ENCODE measurements at regions of chr3 and their contacts with region 1.

Region 1: DNA sequence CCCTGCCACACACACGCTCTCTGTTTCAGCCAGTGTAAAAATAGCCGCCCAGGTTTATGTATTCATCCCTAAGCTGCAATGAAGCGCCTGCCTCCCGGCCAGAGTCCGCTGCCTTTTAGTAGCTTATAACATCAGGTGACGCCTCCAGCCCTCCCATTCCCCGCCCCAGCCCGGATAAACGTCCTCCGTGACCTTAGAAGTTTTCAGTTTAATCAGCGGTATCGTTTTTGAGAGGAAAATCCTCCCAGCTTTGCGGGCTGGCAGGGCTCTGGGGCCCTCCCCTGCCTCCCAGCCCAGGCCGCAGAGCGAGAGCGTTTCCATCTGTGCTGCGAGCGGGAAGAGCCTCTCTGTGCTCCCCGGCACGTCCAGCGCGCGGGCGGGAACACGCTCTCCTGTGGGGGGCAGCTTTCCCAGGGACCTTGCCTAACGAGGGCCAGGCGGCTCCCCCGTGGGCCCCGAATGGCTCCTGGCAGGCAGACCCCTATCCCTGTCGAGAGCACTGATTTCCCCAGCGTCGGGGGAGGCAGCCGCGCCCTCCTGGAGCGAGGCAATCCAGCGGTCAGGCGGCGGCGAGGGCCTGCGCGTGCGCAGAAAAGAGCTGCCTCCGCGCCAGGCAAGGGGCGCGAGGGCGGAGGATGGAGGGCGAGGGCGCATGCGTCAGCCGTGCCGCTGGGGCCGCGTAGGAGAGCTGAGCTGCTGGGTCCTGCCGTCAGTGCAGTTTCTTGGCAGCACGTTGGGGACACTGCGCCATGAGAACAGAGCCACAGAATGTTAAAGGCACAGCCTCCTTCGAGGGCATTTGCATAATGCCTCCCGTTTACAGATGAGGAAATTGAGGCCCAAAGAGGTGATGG is 71.1 kb downstream of the CCNL1 start:
- DNase-seq: peak; percentile 94 to 95 (median 94)
- H3K4me3 ChIP-seq: peak overlapping the region; percentile 49 to 76
- H3K4me3 Mint-ChIP-seq: peak overlapping the region; percentile 79 to 93 (median 89)
- H3K27ac ChIP-seq: peak overlapping the region; percentile 91
- H3K27ac Mint-ChIP-seq: peak overlapping the region; percentile 99 to 100 (median 99)
- H3K4me1 ChIP-seq: peaks cover 41% of the 10 kb centered on the region
- H3K4me1 Mint-ChIP-seq: peaks cover 30 to 50% (median 41%) of the 10 kb centered on the region in 4 donors
- H3K27me3 ChIP-seq: no peaks in the 10 kb centered on the region
- H3K27me3 Mint-ChIP-seq: no peaks in the 10 kb centered on the region

Region 2: GRCh38 chr3:155730847-155731246 is 1358.0 kb before region 1 on chr3:
- CTCF ChIA-PET with region 1: no interaction called
- POLR2A ChIA-PET with region 1: no interaction called
- intact Hi-C with region 1: no loop called
- DNase-seq: no peak
- H3K4me3 ChIP-seq: no peak overlapping the region
- H3K4me3 Mint-ChIP-seq: no peak overlapping the region
- H3K27ac ChIP-seq: no peak overlapping the region
- H3K27ac Mint-ChIP-seq: no peak overlapping the region
- H3K4me1 ChIP-seq: no peaks in the 10 kb centered on the region
- H3K4me1 Mint-ChIP-seq: no peaks in the 10 kb centered on the region
- H3K27me3 ChIP-seq: peaks cover 3% of the 10 kb centered on the region
- H3K27me3 Mint-ChIP-seq: peaks cover 14 to 20% of the 10 kb centered on the region in 2 donors

Region 3: GRCh38 chr3:156483961-156484787 is 604.7 kb before region 1 on chr3:
- CTCF ChIA-PET with region 1: interaction called, 8 read pairs
- POLR2A ChIA-PET with region 1: interaction called, 32 read pairs
- intact Hi-C with region 1: no loop called
- DNase-seq: peak; percentile 55 to 81 (median 64)
- H3K4me3 ChIP-seq: peak overlapping the region; percentile 42 to 55
- H3K4me3 Mint-ChIP-seq: peak overlapping the region; percentile 21 to 87 (median 77)
- H3K27ac ChIP-seq: peak overlapping the region; percentile 63
- H3K27ac Mint-ChIP-seq: peak overlapping the region; percentile 77 to 94 (median 92)
- H3K4me1 ChIP-seq: peaks cover 43% of the 10 kb centered on the region
- H3K4me1 Mint-ChIP-seq: peaks cover 32 to 52% (median 39%) of the 10 kb centered on the region in 4 donors
- H3K27me3 ChIP-seq: no peaks in the 10 kb centered on the region
- H3K27me3 Mint-ChIP-seq: no peaks in the 10 kb centered on the region

Region 4: GRCh38 chr3:156723182-156723619 is 365.6 kb before region 1 on chr3:
- CTCF ChIA-PET with region 1: no interaction called
- POLR2A ChIA-PET with region 1: no interaction called
- intact Hi-C with region 1: no loop called
- DNase-seq: no peak
- H3K4me3 ChIP-seq: no peak overlapping the region
- H3K4me3 Mint-ChIP-seq: no peak overlapping the region
- H3K27ac ChIP-seq: no peak overlapping the region
- H3K27ac Mint-ChIP-seq: no peak overlapping the region
- H3K4me1 ChIP-seq: no peaks in the 10 kb centered on the region
- H3K4me1 Mint-ChIP-seq: peaks cover 0 to 2% (median under 1%) of the 10 kb centered on the region in 4 donors
- H3K27me3 ChIP-seq: no peaks in the 10 kb centered on the region
- H3K27me3 Mint-ChIP-seq: no peaks in the 10 kb centered on the region

Region 5: GRCh38 chr3:157064402-157064801 is 24.4 kb before region 1 on chr3:
- CTCF ChIA-PET with region 1: interaction called, 10 read pairs
- POLR2A ChIA-PET with region 1: interaction called, 37 read pairs
- intact Hi-C with region 1: no loop called
- DNase-seq: no peak
- H3K4me3 ChIP-seq: no peak overlapping the region
- H3K4me3 Mint-ChIP-seq: no peak overlapping the region
- H3K27ac ChIP-seq: no peak overlapping the region
- H3K27ac Mint-ChIP-seq: peak overlapping the region in 3 of 7 donors; percentile 39 to 70 (median 42)
- H3K4me1 ChIP-seq: peaks cover 38% of the 10 kb centered on the region
- H3K4me1 Mint-ChIP-seq: peaks cover 23 to 45% (median 36%) of the 10 kb centered on the region in 4 donors
- H3K27me3 ChIP-seq: no peaks in the 10 kb centered on the region
- H3K27me3 Mint-ChIP-seq: peaks cover 0 to 2% of the 10 kb centered on the region in 2 donors

Region 6: GRCh38 chr3:157104928-157105652 is 16.3 kb after region 1 on chr3:
- CTCF ChIA-PET with region 1: interaction called, 18 read pairs
- POLR2A ChIA-PET with region 1: interaction called, 43 read pairs
- intact Hi-C with region 1: loop called (anchors 2 kb)
- DNase-seq: peak in 3 of 5 donors; percentile 30 to 37 (median 32)
- H3K4me3 ChIP-seq: no peak overlapping the region
- H3K4me3 Mint-ChIP-seq: peak overlapping the region in 7 of 8 donors; percentile 3 to 57 (median 32)
- H3K27ac ChIP-seq: no peak overlapping the region
- H3K27ac Mint-ChIP-seq: peak overlapping the region; percentile 54 to 96 (median 85)
- H3K4me1 ChIP-seq: peaks cover 30% of the 10 kb centered on the region
- H3K4me1 Mint-ChIP-seq: peaks cover 22 to 38% (median 31%) of the 10 kb centered on the region in 4 donors
- H3K27me3 ChIP-seq: no peaks in the 10 kb centered on the region
- H3K27me3 Mint-ChIP-seq: no peaks in the 10 kb centered on the region

Region 7: DNA sequence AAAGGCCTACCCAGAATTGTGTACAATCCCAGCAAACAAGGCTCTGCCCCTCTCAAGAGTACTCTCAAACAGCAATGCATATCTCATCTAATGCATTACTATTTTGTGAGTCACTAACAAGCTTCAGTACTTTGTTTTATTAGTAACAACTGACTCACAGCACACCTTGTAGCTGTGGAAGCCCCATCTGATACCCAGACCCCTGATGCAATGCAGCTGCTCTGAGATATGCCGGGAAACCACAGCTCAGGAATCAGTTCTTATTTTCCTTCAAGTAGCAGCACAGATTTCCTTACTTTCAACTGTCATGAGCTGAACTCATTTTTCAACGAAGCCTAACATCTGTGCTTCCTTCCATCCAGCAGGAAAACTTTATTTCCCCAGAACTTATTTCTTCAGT is 33.3 kb after region 1 on chr3:
- CTCF ChIA-PET with region 1: interaction called, 346 read pairs
- POLR2A ChIA-PET with region 1: interaction called, 104 read pairs
- intact Hi-C with region 1: no loop called
- DNase-seq: no peak
- H3K4me3 ChIP-seq: no peak overlapping the region
- H3K4me3 Mint-ChIP-seq: no peak overlapping the region
- H3K27ac ChIP-seq: no peak overlapping the region
- H3K27ac Mint-ChIP-seq: peak overlapping the region in 2 of 7 donors; percentile 33 to 38
- H3K4me1 ChIP-seq: peaks cover 8% of the 10 kb centered on the region
- H3K4me1 Mint-ChIP-seq: peaks cover 6 to 11% (median 8%) of the 10 kb centered on the region in 4 donors
- H3K27me3 ChIP-seq: no peaks in the 10 kb centered on the region
- H3K27me3 Mint-ChIP-seq: no peaks in the 10 kb centered on the region

Region 8: DNA sequence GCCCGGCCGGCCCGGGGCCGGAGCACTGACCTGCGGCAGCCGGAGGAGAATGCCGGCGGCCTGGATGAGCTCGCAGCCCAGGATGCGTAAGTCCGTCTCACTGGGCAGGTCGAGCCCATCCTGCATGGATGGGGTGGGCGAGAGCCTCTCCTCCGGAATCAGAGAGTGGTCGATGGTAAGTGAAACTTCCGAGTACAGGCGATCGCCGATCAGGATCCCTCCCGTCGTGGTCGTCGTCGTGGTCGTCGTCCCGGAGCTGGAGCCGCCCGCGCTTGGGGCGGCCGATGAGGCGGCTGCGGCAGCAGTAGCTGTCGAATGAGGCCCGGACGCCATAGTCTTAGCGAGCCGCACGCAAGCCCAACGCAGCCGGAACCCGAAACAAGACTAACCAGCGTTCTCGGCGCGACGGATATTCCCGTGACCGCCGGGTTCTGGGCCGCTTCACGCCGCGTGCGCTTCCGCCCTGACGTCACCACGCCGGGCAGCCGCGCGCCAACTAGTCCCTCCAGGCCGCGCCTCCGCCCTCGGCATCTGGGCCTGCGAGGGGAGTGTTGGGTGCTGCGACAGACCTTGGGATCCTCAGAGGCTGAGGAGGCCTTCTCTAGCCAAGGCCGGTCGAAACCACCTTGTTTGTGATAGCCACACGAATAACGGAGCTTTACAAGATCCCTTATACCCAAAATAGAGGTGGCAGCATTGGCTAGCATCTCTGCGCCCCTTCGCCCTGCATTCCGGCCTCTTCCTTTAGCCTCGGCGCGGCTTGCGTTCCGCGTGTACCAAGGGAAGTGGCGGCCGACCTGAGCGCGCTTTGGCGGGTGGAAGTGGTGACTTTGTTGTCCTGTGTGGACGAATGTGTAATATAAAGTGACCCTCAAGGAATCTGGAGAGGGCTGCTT is 71.2 kb after region 1 on chr3 and contains the start of gene CCNL1:
- CTCF ChIA-PET with region 1: no interaction called
- POLR2A ChIA-PET with region 1: interaction called, 51 read pairs
- intact Hi-C with region 1: loop called (anchors 1 kb)
- DNase-seq: peak; percentile 93 to 97 (median 96)
- H3K4me3 ChIP-seq: peak within 1 kb of the TSS; percentile 87 to 97
- H3K4me3 Mint-ChIP-seq: peak within 1 kb of the TSS; percentile 92 to 99 (median 96)
- H3K27ac ChIP-seq: peak within 1 kb of the TSS; percentile 100
- H3K27ac Mint-ChIP-seq: peak within 1 kb of the TSS; percentile 99 to 100 (median 100)
- H3K4me1 ChIP-seq: peaks cover 57% of the 10 kb centered on the region
- H3K4me1 Mint-ChIP-seq: peaks cover 37 to 64% (median 51%) of the 10 kb centered on the region in 4 donors
- H3K27me3 ChIP-seq: no peaks in the 10 kb centered on the region
- H3K27me3 Mint-ChIP-seq: no peaks in the 10 kb centered on the region
- total RNA-seq, gene CCNL1: 327 to 330 TPM